Activated CD8-positive, alpha-beta T cell treated with anti-CD3 and anti-CD28 coated beads, Interleukin-2, amount 10 ng/mL, durations not matched to agents 7 days and 5 days (primary cell): ENCODE measurements at regions of chr15 and their contacts with region 1.

Region 1: GRCh38 chr15:40274350-40275274 is 8.3 kb downstream of the ANKRD63 start:
- DNase-seq: peak; percentile 91
- ATAC-seq: peak; percentile 60
- H3K4me3 Mint-ChIP-seq: no peak overlapping the region
- H3K27ac Mint-ChIP-seq: no peak overlapping the region
- H3K4me1 Mint-ChIP-seq: peaks cover 21% of the 10 kb centered on the region
- H3K27me3 Mint-ChIP-seq: peaks cover 25% of the 10 kb centered on the region

Region 2: GRCh38 chr15:40038638-40039543 is 235.7 kb before region 1 on chr15 and contains the start of gene SRP14:
- CTCF ChIA-PET with region 1: interaction called, 27 read pairs
- POLR2A ChIA-PET with region 1: no interaction called
- DNase-seq: peak; percentile 95
- ATAC-seq: peak; percentile 95
- H3K4me3 Mint-ChIP-seq: peak within 1 kb of the TSS; percentile 97
- H3K27ac Mint-ChIP-seq: peak within 1 kb of the TSS; percentile 95
- H3K4me1 Mint-ChIP-seq: peaks cover 50% of the 10 kb centered on the region
- H3K27me3 Mint-ChIP-seq: no peaks in the 10 kb centered on the region
- total RNA-seq, gene SRP14: 178 to 182 TPM

Region 3: DNA sequence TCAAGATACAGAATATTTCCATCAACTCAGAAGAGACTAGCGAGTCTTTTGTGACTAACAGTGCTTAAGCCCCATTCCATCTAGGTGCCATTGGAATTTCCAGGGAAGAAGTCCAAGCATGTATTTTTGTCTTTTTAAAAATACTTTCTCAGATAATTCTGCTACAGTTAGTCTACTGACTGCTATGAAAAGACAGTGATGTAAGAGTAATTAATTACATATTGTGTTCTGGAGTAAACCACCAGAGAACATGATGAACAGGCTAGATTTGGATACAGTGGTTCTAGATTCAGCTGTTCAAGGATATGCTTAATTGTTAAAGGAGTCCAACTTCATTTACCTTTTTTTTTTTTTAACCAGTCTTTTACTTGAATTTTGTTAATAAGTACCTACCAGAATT is 70.5 kb before region 1 on chr15:
- CTCF ChIA-PET with region 1: interaction called, 12 read pairs
- POLR2A ChIA-PET with region 1: no interaction called
- DNase-seq: no peak
- ATAC-seq: no peak
- H3K4me3 Mint-ChIP-seq: no peak overlapping the region
- H3K27ac Mint-ChIP-seq: no peak overlapping the region
- H3K4me1 Mint-ChIP-seq: no peaks in the 10 kb centered on the region
- H3K27me3 Mint-ChIP-seq: no peaks in the 10 kb centered on the region

Region 4: DNA sequence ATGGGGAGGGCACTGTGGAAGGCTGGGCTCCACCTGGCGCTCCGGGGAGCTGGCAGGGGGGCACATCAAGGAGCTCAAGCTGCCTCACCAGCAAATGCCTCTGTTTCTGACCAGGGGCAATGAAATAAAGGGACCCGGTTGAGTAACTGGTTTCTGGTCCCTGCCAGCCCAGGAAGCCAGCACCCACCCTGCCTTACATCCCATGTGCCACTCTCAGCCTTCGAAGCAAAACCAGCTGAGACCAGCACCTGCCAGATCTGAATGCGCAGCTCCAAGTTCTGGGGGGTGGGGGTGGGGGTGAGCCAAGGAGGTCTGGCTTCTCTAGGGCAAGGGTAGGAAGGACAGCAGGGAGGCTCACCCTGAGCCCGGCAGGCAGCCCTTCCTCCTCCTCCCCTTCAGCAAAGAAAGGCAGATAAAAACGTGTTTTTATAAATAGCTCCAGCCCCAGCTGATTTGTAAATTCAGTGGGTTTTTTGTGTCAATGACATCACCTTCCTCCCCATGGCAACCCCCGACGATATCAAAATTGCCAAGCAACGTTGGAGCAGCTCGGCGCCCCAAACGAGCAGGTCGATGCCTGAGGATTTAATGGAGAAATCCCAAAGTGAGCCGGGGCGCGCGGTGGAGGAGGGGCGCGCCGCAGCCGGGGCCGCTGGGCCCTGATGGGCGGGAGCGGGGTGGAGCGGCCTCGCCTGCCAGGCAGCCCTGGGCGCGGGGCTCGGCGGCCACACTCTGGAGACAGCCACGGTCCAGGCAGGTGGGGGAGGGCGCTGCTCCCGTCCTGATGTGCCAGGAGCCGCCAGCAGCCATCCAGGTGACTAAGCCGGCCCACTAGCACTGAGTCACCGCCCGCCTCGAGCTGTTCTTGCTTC is 35.8 kb before region 1 on chr15 and contains the start of gene PAK6:
- CTCF ChIA-PET with region 1: interaction called, 43 read pairs
- POLR2A ChIA-PET with region 1: no interaction called
- DNase-seq: peak; percentile 44
- ATAC-seq: peak; percentile 73
- H3K4me3 Mint-ChIP-seq: no peak within 1 kb of the TSS
- H3K27ac Mint-ChIP-seq: no peak within 1 kb of the TSS
- H3K4me1 Mint-ChIP-seq: peaks cover 24% of the 10 kb centered on the region
- H3K27me3 Mint-ChIP-seq: peaks cover 17% of the 10 kb centered on the region
- total RNA-seq, gene PAK6: 1.2 to 1.4 TPM

Region 5: DNA sequence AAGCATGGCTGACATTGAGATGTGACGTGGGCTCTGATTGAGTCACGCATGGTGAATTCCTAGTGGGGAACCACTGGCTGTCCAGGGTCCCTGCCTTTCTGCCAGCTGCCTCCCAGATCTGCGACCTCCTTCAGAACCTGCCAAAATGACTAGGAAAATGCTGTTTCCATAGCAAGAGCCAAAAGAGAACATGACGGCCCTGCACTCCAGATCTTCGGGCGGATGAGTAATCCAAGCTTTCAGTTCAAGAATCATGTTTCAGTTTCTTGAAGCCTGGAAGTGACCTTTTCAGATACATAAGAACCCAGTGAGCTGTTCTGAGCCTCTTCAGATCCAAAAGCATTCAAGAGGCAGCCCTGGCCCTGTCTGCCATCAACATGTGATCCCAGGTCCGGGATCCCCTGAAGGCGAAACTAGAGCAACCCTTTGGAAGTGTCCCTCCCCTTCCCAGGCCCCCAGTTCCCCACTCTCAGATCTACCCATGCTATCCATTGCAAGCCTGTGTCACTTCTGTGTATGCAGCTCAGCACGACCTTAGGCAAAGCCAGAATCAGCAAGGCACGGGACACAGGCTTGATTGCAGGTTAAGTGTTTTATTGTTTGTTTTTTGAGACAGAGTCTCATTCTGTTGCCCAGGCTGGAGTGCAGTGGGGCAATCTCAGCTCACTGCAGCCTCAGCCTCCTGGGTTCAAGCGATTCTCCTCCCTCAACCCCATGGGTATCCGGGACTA is 11.4 kb before region 1 on chr15:
- CTCF ChIA-PET with region 1: interaction called, 45 read pairs
- POLR2A ChIA-PET with region 1: interaction called, 3 read pairs
- DNase-seq: no peak
- ATAC-seq: no peak
- H3K4me3 Mint-ChIP-seq: no peak overlapping the region
- H3K27ac Mint-ChIP-seq: no peak overlapping the region
- H3K4me1 Mint-ChIP-seq: no peaks in the 10 kb centered on the region
- H3K27me3 Mint-ChIP-seq: peaks cover 7% of the 10 kb centered on the region

Region 6: DNA sequence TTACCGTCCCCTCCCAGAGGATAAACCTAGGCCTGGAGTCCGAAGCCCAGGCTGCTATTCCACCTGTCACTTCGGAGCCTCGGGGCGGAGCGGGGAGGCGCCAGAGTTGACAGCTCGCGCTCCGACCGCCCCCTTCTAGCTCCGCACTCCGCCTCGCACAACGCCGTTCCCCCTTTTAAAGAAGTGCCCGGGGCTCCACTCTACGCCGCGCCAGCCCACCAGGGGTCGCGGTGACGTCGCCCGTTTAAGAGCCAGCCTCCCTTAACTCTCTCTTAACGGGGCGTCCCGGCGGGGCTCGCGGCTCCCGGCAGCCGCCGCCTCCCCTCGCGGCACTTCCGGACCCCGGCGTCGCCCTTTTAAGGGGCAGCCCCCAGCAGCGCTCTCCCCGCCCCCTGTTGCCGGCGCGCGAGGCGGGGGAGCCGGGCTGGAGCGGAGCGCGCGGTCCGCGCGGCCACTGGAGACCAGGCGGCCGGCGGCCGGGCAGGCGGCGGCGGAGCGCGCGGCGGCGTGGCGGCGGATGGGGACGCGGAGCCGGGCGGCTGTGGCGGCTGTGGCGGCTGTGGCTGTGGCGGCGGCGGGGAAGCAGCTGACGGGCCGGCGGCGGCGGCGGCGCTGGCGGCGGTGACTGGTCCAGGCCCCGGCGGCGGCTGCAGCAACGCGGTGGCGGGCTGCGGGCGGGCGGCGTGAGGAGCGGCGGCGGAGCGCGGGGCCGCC is 48.8 kb after region 1 on chr15 and contains the start of gene INAFM2:
- CTCF ChIA-PET with region 1: interaction called, 559 read pairs
- POLR2A ChIA-PET with region 1: no interaction called
- DNase-seq: peak; percentile 95
- ATAC-seq: peak; percentile 91
- H3K4me3 Mint-ChIP-seq: peak within 1 kb of the TSS; percentile 73
- H3K27ac Mint-ChIP-seq: no peak within 1 kb of the TSS
- H3K4me1 Mint-ChIP-seq: peaks cover 31% of the 10 kb centered on the region
- H3K27me3 Mint-ChIP-seq: peaks cover 8% of the 10 kb centered on the region
- total RNA-seq, gene INAFM2: 8.7 to 9.4 TPM

Region 7: DNA sequence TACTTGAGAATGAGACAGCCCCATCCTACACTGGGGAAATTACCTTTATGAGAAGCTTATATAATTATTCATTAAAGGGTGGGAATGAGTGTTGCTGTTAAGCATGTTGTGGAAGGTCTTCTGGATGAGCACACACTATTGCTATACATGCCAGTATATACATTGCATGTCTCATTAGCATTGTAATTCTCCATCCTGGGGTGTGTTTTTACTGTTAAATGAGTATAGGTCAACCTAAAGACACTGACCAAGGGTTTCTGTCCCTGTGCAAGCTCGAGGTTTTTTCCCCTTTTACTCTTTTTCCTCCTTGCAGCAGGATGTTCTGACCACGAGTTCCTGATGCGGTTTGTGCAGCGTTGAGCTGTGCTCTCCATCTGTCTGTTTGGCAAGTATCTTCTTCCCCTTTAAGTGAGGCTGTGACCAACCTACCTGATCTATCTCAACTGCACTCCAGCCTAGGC is 123.8 kb after region 1 on chr15:
- CTCF ChIA-PET with region 1: interaction called, 10 read pairs
- POLR2A ChIA-PET with region 1: no interaction called
- DNase-seq: peak; percentile 46
- ATAC-seq: peak; percentile 86
- H3K4me3 Mint-ChIP-seq: peak overlapping the region; percentile 61
- H3K27ac Mint-ChIP-seq: peak overlapping the region; percentile 84
- H3K4me1 Mint-ChIP-seq: peaks cover 31% of the 10 kb centered on the region
- H3K27me3 Mint-ChIP-seq: no peaks in the 10 kb centered on the region